GM23248 (cell line): ENCODE measurements at regions of chr15 and their contacts with region 1.

Region 1: GRCh38 chr15:72671535-72671934 is 14.4 kb downstream of the HIGD2B start:
- DNase-seq: no peak
- H3K4me3 ChIP-seq: no peak overlapping the region
- H3K27ac ChIP-seq: no peak overlapping the region
- H3K4me1 ChIP-seq: no peaks in the 10 kb centered on the region
- H3K27me3 ChIP-seq: peaks cover 22% of the 10 kb centered on the region; the same call in 1 of the 2 replicates

Region 2: DNA sequence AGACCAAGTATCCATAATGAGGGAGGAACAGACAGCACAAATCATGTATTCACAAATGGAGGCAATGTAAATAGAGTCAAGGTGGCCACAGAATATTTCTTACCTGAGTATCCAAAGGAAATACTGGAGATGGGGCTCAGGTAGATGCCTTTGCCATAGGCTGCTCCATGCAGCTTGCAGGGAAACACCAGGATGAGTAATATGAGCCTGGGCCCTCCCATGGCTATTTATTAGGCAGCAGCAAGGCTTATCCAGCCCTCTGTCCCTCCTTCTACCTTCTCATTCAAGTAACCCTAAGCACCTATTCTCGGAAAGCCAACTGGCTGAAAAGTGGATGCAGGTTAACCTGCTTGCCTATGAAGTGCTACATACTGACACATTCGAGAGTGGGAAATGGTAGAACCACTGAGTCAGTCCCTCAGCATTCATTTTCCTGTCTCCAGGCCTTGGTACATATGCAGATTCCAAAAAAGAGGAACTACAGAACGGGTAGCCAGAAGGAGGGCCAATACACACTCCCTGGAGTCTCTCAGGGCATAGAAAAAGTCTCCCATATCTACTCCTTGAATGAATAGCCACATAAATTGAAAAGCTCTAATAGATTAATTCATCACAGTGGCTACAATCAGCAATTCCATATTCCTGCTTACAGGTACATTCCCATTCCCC is 422.3 kb before region 1 on chr15:
- in situ Hi-C with region 1: no loop called
- DNase-seq: no peak
- H3K4me3 ChIP-seq: no peak overlapping the region
- H3K27ac ChIP-seq: no peak overlapping the region
- H3K4me1 ChIP-seq: no peaks in the 10 kb centered on the region
- H3K27me3 ChIP-seq: no peaks in the 10 kb centered on the region

Region 3: GRCh38 chr15:72559781-72560180 is 111.8 kb before region 1 on chr15:
- in situ Hi-C with region 1: no loop called
- DNase-seq: no peak
- H3K4me3 ChIP-seq: no peak overlapping the region
- H3K27ac ChIP-seq: no peak overlapping the region
- H3K4me1 ChIP-seq: peaks cover 14% of the 10 kb centered on the region
- H3K27me3 ChIP-seq: no peaks in the 10 kb centered on the region

Region 4: DNA sequence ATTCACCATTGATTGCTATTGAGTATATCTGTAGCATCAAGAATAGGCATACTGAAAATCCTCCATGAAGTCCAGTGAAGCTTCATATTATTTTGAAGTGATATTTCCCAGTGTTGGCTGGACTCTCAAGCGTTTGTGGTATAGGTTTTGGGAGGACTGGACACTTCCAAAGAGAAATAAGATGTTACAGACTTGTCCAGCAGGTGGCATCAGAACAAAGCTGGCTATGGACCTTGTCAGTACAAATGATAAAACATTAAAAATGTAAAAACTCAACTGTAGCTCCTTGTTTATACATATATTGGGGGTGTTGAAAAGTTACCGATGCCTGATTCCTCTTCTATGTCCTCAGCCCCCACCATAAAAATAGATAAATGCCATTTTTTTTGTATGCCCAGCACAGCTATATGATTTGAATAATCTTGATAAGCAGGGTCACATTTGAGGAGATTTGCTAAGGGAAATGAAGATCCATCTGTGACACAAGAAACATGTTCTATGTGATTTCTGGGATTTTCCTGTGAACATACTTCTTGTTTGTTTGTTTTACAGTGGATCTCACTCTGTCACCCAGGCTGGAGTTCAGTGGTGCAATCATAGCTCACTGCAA is 71.6 kb before region 1 on chr15:
- in situ Hi-C with region 1: loop called (anchors 10 kb)
- DNase-seq: peak; percentile 65
- H3K4me3 ChIP-seq: no peak overlapping the region
- H3K27ac ChIP-seq: no peak overlapping the region
- H3K4me1 ChIP-seq: no peaks in the 10 kb centered on the region
- H3K27me3 ChIP-seq: no peaks in the 10 kb centered on the region

Region 5: DNA sequence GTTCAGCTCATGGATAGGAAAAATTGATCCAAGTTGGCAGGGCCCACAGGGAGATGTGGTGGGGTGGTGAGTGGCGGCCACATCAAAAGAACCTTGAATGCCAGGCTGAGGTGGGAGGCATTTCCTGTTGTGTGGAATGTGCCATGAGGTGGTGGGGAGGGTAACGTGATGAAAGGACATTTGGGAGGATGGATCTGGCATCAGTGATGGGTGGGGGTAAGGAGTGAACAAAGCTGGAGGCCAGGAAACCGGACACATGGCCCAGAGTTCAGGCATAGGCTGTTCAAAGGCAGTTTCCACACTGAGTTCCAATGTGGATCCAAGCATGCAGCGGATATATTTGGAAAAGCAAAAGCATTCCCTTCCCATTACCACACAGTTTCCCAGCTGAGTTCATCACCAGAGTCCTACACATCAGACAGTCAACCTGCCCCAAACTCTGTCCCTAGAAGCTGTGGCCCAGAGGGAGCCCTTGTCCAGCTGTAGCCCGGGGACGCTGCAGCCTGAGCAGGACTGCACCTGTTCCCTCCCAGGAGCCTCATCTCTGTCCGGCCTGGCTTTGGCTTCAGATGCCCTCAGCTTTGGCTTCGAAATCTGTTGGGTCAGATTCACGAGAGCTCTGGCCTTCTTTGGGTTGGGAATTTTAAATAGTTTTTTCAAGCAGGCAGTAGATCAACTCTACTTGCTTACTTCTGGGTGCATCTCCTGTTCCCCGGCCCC is 54.9 kb before region 1 on chr15:
- in situ Hi-C with region 1: loop called (anchors 10 kb)
- DNase-seq: no peak
- H3K4me3 ChIP-seq: no peak overlapping the region
- H3K27ac ChIP-seq: no peak overlapping the region
- H3K4me1 ChIP-seq: no peaks in the 10 kb centered on the region
- H3K27me3 ChIP-seq: no peaks in the 10 kb centered on the region

Region 6: DNA sequence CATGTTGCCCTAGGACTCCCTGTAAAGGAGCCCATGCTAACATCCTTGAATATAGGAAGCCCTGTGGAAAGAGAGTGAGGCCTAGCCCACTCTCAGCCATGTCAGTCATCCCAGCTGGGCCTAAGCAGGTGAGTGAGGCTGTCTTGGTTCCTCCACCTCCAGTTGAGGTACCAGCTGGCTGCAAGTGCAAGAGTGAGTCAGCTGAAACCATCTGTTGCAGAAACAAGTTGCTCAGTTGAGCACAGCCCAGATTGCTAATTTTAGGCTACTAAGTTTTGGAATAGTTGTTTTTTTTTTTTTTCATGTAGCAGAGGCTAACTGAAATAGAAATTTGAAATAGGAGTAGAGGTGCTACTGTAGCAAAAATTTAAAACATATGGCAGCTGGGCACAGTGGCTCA is 155.7 kb after region 1 on chr15:
- in situ Hi-C with region 1: no loop called
- DNase-seq: peak; percentile 24
- H3K4me3 ChIP-seq: no peak overlapping the region
- H3K27ac ChIP-seq: no peak overlapping the region
- H3K4me1 ChIP-seq: no peaks in the 10 kb centered on the region
- H3K27me3 ChIP-seq: peaks cover 23% of the 10 kb centered on the region